ENCODE measurements at regions of chr10 and their contacts with region 1.

Region 1: GRCh38 chr10:99711129-99711719 is 20.7 kb downstream of the COX15 start:
- DNase-seq: no peak
- ATAC-seq: peak; percentile 60
- H3K4me3 Mint-ChIP-seq: no peak overlapping the region
- H3K27ac Mint-ChIP-seq: no peak overlapping the region
- H3K4me1 Mint-ChIP-seq: no peaks in the 10 kb centered on the region
- H3K27me3 Mint-ChIP-seq: no peaks in the 10 kb centered on the region
- CTCF ChIP-seq: no peak

Region 2: DNA sequence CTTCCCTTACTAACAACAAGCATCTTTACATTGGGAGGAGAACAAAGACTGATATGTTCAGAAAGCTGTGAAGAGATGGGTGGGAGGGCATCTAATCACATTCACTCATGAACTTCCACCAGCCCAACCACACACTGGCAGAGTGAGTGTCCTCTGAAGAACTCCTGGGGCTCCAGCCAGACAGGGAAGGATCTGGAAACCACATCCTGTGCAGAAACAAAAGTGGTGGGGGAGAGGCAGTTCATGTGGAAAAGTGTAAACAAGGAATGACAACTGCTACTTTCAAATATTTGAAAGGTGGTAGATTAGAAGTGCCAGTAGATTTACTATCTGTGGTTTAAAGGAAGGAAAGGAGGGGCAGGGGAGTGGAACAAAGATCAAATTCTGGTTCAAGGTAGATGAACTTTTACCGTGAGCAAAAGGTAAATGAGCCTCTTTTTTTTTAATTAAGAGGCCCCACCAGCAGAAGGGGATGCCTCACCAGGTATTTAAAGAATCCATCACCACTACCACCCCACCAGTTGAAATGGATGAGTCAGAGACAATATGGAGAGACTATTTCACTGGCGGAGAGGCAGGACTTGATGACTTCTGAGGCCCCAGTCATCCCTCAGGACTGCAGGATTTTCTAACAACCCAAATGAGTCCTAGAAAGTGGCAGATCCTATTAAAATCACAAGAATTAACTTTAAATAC is 315.3 kb before region 1 on chr10:
- CTCF ChIA-PET with region 1: interaction called, 16 read pairs
- POLR2A ChIA-PET with region 1: no interaction called
- intact Hi-C with region 1: loop called (anchors 1 kb)
- DNase-seq: no peak
- ATAC-seq: no peak
- H3K4me3 Mint-ChIP-seq: no peak overlapping the region
- H3K27ac Mint-ChIP-seq: no peak overlapping the region
- H3K4me1 Mint-ChIP-seq: no peaks in the 10 kb centered on the region
- H3K27me3 Mint-ChIP-seq: peaks cover 2% of the 10 kb centered on the region
- CTCF ChIP-seq: no peak

Region 3: DNA sequence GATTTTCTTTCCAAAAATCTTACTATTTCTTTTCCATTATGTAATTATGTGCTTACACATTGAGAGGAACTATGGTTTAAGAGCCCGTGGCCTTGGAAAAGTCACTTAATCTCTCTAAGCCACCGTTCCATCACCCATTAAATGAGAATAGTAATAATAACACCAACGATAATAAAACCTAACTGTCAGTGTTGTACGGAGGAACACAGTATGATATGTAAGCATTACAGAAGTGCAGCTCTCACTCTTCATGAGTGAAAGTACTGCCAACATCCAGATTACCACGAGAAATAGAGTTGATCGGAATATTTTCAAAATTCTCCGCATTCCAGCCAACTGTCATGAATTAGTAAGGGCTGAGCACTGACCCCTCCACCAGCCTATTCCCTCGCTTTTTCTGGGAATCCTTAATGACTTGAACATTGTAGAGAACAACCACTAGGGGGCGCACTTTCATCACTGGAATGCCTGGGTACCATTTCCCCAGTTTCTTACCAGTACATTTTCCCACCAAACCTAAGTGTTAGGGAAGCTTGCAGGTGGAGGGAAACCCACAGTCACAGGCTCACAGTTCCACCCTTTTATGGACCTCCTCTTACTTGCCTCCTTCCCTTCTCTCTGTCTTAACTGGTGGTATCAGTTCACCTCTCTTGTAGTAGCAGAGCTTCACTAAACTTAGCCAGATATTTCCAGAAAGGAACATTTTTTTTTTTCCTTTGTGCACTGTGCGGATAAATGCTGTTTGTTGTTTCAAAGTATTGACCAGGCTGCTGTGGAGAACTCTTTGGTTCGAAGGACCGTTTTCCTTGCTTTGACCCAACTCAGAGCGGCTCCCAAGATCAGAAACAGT is 150.7 kb before region 1 on chr10:
- CTCF ChIA-PET with region 1: interaction called, 4 read pairs
- POLR2A ChIA-PET with region 1: no interaction called
- intact Hi-C with region 1: loop called (anchors 1 kb)
- DNase-seq: no peak
- ATAC-seq: peak; percentile 31
- H3K4me3 Mint-ChIP-seq: no peak overlapping the region
- H3K27ac Mint-ChIP-seq: no peak overlapping the region
- H3K4me1 Mint-ChIP-seq: peaks cover 24% of the 10 kb centered on the region
- H3K27me3 Mint-ChIP-seq: peaks cover 5% of the 10 kb centered on the region
- CTCF ChIP-seq: peak; percentile 62

Region 4: GRCh38 chr10:99630439-99630838 is 80.8 kb before region 1 on chr10:
- CTCF ChIA-PET with region 1: interaction called, 5 read pairs
- POLR2A ChIA-PET with region 1: no interaction called
- intact Hi-C with region 1: loop called (anchors 1 kb)
- DNase-seq: no peak
- ATAC-seq: no peak
- H3K4me3 Mint-ChIP-seq: no peak overlapping the region
- H3K27ac Mint-ChIP-seq: no peak overlapping the region
- H3K4me1 Mint-ChIP-seq: no peaks in the 10 kb centered on the region
- H3K27me3 Mint-ChIP-seq: peaks cover 25% of the 10 kb centered on the region
- CTCF ChIP-seq: no peak

Region 5: GRCh38 chr10:100204370-100204769 is 493.1 kb after region 1 on chr10:
- CTCF ChIA-PET with region 1: no interaction called
- POLR2A ChIA-PET with region 1: no interaction called
- intact Hi-C with region 1: no loop called
- DNase-seq: no peak
- ATAC-seq: no peak
- H3K4me3 Mint-ChIP-seq: no peak overlapping the region
- H3K27ac Mint-ChIP-seq: no peak overlapping the region
- H3K4me1 Mint-ChIP-seq: no peaks in the 10 kb centered on the region
- H3K27me3 Mint-ChIP-seq: no peaks in the 10 kb centered on the region
- CTCF ChIP-seq: no peak

Measured in activated B cell treated with CpG ODN at 0.5 μM for 24 hours (primary cell).